Right ventricle myocardium superior (tissue), 1 donor: ENCODE measurements at regions of chr1 and their contacts with region 1.

Region 1: GRCh38 chr1:224513787-224514209 is 79.2 kb upstream of the WDR26 start:
- DNase-seq: peak; percentile 91
- ATAC-seq: peak; percentile 98

Region 2: GRCh38 chr1:224851210-224851847 is 337.5 kb after region 1 on chr1:
- intact Hi-C with region 1: loop called (anchors 5 kb)
- DNase-seq: peak; percentile 62
- ATAC-seq: peak; percentile 75

Region 3: GRCh38 chr1:224922404-224923164 is 408.8 kb after region 1 on chr1:
- intact Hi-C with region 1: loop called (anchors 5 kb)
- DNase-seq: no peak
- ATAC-seq: peak; percentile 74